AG04450 (cell line): ENCODE measurements at regions of chr15 and their contacts with region 1.

Region 1: DNA sequence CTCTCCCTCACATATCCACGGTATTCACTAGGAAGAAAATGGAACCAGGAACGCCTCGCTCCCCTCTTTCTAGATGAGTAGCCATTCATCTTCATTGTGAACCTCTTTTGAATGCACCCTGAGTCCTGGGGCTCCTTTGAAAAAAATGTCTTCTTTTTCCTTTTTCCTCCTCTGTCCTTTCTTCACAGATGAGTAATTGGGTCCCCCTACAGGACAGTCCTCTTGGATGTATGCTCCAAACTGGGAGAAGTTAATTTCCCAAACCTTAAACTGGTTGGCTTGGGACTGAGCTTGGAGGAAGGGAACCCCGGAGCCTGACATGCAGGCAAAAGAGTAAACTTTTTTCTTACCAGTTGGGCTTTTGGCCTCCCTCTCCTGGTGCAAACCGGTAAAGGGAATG is 108.8 kb downstream of the DPH6 start:
- DNase-seq: no peak
- H3K4me3 ChIP-seq: no peak overlapping the region
- H3K27ac ChIP-seq: no peak overlapping the region
- H3K27me3 ChIP-seq: no peaks in the 10 kb centered on the region
- CTCF ChIP-seq: 0 out of 2 replicates have a peak, but pooled peaks have one; percentile 25

Region 2: GRCh38 chr15:35028235-35028984 is 408.7 kb before region 1 on chr15:
- CTCF ChIA-PET with region 1: no interaction called
- POLR2A ChIA-PET with region 1: interaction called, 13 read pairs
- DNase-seq: no peak
- H3K4me3 ChIP-seq: no peak overlapping the region
- H3K27ac ChIP-seq: no peak overlapping the region
- H3K27me3 ChIP-seq: no peaks in the 10 kb centered on the region
- CTCF ChIP-seq: no peak

Region 3: GRCh38 chr15:35243758-35244157 is 193.4 kb before region 1 on chr15:
- CTCF ChIA-PET with region 1: no interaction called
- POLR2A ChIA-PET with region 1: no interaction called
- DNase-seq: no peak
- H3K4me3 ChIP-seq: no peak overlapping the region
- H3K27ac ChIP-seq: no peak overlapping the region
- H3K27me3 ChIP-seq: no peaks in the 10 kb centered on the region
- CTCF ChIP-seq: no peak

Region 4: GRCh38 chr15:35458176-35458856 is 21.2 kb after region 1 on chr15:
- CTCF ChIA-PET with region 1: no interaction called
- POLR2A ChIA-PET with region 1: no interaction called
- DNase-seq: no peak
- H3K4me3 ChIP-seq: no peak overlapping the region
- H3K27ac ChIP-seq: no peak overlapping the region
- H3K27me3 ChIP-seq: no peaks in the 10 kb centered on the region
- CTCF ChIP-seq: no peak